ENCODE measurements at regions of chr7 and their contacts with region 1.

Region 1: GRCh38 chr7:80392229-80393169 is 119.4 kb downstream of the GNAT3 start:
- DNase-seq: no peak
- ATAC-seq: no peak
- H3K4me3 ChIP-seq: no peak overlapping the region
- H3K27ac ChIP-seq: no peak overlapping the region
- H3K4me1 ChIP-seq: no peaks in the 10 kb centered on the region
- H3K27me3 ChIP-seq: no peaks in the 10 kb centered on the region
- CTCF ChIP-seq: peak; percentile 40 to 76 (median 62)
- POLR2A ChIP-seq: no peak

Region 2: GRCh38 chr7:80060218-80060806 is 332.2 kb before region 1 on chr7:
- intact Hi-C with region 1: loop called in 5 of 10 experiments (anchors 2 to 5 kb)
- DNase-seq: no peak
- ATAC-seq: no peak
- H3K4me3 ChIP-seq: no peak overlapping the region
- H3K27ac ChIP-seq: no peak overlapping the region
- H3K4me1 ChIP-seq: no peaks in the 10 kb centered on the region
- H3K27me3 ChIP-seq: no peaks in the 10 kb centered on the region
- CTCF ChIP-seq: peak; percentile 26 to 70 (median 59)
- POLR2A ChIP-seq: no peak

Region 3: GRCh38 chr7:80095545-80095944 is 297.0 kb before region 1 on chr7:
- intact Hi-C with region 1: loop called (anchors 1 to 10 kb)
- DNase-seq: no peak
- ATAC-seq: no peak
- H3K4me3 ChIP-seq: no peak overlapping the region
- H3K27ac ChIP-seq: no peak overlapping the region
- H3K4me1 ChIP-seq: no peaks in the 10 kb centered on the region
- H3K27me3 ChIP-seq: no peaks in the 10 kb centered on the region
- CTCF ChIP-seq: peak; percentile 38 to 68 (median 48)
- POLR2A ChIP-seq: no peak

Region 4: GRCh38 chr7:80134536-80135320 is 257.8 kb before region 1 on chr7 and contains the start of gene GNAI1:
- intact Hi-C with region 1: loop called in 9 of 10 experiments (anchors 2 to 10 kb)
- DNase-seq: peak; percentile 66 to 84 (median 72)
- ATAC-seq: peak; percentile 48 to 93 (median 86)
- H3K4me3 ChIP-seq: peak within 1 kb of the TSS; percentile 62 to 99 (median 97)
- H3K27ac ChIP-seq: peak within 1 kb of the TSS; percentile 63 to 94 (median 86)
- H3K4me1 ChIP-seq: peaks cover 0 to 27% (median 11%) of the 10 kb centered on the region in 12 donors
- H3K27me3 ChIP-seq: peaks cover 0 to 5% (median 0%) of the 10 kb centered on the region in 9 donors
- CTCF ChIP-seq: peak in 10 of 12 donors; percentile 1 to 62 (median 47)
- POLR2A ChIP-seq: peak in 1 of 2 donors; percentile 70
- total RNA-seq, gene GNAI1: 9.9 to 26.1 (median 16.5) TPM

Region 5: DNA sequence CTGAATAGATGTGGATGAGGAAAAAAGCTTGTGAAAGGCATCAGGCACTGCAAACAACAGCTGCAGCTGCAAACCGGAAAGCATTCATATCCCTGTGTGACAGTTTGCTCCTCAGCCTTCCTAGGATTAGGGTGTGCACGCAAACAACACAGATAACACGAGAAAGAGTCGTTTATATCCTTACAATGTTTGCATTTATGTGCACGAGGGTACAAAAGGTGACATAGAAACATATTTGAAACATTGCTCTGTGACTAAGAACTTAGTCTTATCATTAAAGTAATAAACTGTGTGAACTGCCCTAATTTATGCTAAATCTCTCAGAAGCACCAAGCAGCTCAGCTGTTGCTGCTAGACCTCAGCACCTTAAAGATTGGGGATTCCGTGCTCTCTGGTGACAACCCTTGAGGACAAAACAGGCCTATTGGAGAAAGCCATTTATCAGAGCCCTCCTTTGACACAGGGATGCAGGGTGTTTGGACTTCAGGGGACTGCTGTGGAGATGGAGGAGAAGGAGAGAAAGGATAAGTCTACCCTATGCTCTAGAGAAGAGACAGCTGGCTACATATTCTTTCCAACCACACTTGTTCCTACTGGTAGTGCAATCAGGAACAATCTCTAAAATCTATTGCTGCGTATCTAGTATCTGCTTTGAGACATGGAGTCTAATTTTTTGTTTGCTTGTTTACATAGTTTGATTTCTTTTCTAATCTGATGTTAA is 56.8 kb before region 1 on chr7:
- intact Hi-C with region 1: loop called in 2 of 10 experiments (anchors 5 to 10 kb)
- DNase-seq: no peak
- ATAC-seq: peak in 2 of 4 donors; percentile 56 to 67
- H3K4me3 ChIP-seq: no peak overlapping the region
- H3K27ac ChIP-seq: peak overlapping the region in 7 of 12 donors; percentile 19 to 49 (median 31)
- H3K4me1 ChIP-seq: peaks cover 0 to 21% (median 7%) of the 10 kb centered on the region in 12 donors
- H3K27me3 ChIP-seq: no peaks in the 10 kb centered on the region
- CTCF ChIP-seq: no peak
- POLR2A ChIP-seq: no peak

Region 6: DNA sequence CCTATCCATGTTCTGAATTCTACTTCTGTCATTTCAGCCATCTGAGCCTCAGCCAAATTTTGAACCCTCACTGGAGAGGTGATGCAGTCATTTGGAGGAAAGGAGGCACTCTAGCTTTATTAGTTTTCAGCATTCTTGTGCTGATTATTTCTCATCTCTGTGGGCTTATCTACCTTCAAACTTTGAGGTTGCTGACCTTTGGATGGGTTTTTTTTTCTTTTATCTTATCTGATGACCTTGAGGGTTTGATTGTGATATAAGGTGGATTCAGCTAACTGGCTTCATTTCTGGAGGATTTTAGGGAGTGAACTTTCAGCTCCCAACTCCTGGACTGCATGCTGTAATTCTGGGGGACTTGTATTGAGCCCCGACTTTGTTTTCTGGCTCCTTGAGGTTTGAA is 170.7 kb after region 1 on chr7:
- intact Hi-C with region 1: no loop called
- DNase-seq: no peak
- ATAC-seq: no peak
- H3K4me3 ChIP-seq: no peak overlapping the region
- H3K27ac ChIP-seq: no peak overlapping the region
- H3K4me1 ChIP-seq: no peaks in the 10 kb centered on the region
- H3K27me3 ChIP-seq: no peaks in the 10 kb centered on the region
- CTCF ChIP-seq: no peak
- POLR2A ChIP-seq: no peak